Sigmoid colon (tissue), 7 donors: ENCODE measurements at regions of chrX and their contacts with region 1.

Region 1: GRCh38 chrX:10239611-10240064 is 82.9 kb downstream of the CLCN4 start:
- DNase-seq: peak; percentile 68
- H3K4me3 ChIP-seq: no peak overlapping the region
- H3K27ac ChIP-seq: peak overlapping the region in 3 of 4 donors; percentile 26 to 78 (median 73)
- H3K4me1 ChIP-seq: peaks cover 0 to 38% (median 10%) of the 10 kb centered on the region in 4 donors
- H3K27me3 ChIP-seq: no peaks in the 10 kb centered on the region
- CTCF ChIP-seq: no peak
- EP300 ChIP-seq: no peak
- POLR2A ChIP-seq: no peak

Region 2: DNA sequence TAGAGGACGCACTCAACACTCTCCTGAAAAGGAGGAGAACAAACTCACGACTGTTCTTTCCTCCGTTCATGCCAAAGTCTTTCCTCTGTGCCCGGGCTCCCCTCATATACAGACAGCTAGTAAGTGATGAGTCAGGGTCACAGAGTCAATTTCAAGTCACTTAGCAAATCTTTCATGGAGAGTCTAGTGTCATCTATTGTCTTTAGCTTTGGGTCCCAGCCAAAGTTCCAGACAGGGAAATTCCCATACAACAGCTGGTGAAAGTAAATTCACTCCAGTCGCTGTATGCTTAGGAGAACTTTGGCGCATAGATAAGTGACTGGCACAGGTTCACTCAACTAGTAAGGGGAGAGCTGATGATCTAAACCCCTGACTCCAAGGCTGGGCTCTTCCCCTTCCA is 154.3 kb after region 1 on chrX:
- intact Hi-C with region 1: loop called (anchors 10 kb)
- DNase-seq: no peak
- H3K4me3 ChIP-seq: no peak overlapping the region
- H3K27ac ChIP-seq: no peak overlapping the region
- H3K4me1 ChIP-seq: peaks cover 0 to 4% (median 1%) of the 10 kb centered on the region in 4 donors
- H3K27me3 ChIP-seq: no peaks in the 10 kb centered on the region
- CTCF ChIP-seq: no peak
- EP300 ChIP-seq: no peak
- POLR2A ChIP-seq: no peak

Region 3: DNA sequence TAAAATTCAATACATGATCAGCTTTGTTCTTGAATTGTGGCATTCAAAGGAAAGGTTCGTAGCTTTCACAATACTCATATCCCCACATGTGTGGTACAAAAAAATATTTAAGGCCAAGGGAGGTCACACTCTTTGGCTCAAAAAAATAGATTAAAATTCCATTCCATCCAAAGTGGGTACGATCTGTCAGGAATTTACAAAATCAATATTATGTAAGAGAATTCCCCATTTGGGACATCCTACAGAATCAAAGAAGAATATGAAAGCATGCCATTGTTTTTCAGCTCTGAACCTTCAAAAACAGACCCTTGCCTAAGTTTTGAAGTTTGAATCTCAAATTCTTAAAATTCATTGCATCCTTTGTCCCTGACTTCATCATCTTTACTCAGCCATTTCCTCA is 295.0 kb after region 1 on chrX:
- intact Hi-C with region 1: no loop called
- DNase-seq: no peak
- H3K4me3 ChIP-seq: no peak overlapping the region
- H3K27ac ChIP-seq: no peak overlapping the region
- H3K4me1 ChIP-seq: peaks cover 0 to 16% (median 0%) of the 10 kb centered on the region in 4 donors
- H3K27me3 ChIP-seq: no peaks in the 10 kb centered on the region
- CTCF ChIP-seq: no peak
- EP300 ChIP-seq: no peak
- POLR2A ChIP-seq: no peak